CD4-positive, alpha-beta T cell (primary cell): ENCODE measurements at regions of chr12 and their contacts with region 1.

Region 1: DNA sequence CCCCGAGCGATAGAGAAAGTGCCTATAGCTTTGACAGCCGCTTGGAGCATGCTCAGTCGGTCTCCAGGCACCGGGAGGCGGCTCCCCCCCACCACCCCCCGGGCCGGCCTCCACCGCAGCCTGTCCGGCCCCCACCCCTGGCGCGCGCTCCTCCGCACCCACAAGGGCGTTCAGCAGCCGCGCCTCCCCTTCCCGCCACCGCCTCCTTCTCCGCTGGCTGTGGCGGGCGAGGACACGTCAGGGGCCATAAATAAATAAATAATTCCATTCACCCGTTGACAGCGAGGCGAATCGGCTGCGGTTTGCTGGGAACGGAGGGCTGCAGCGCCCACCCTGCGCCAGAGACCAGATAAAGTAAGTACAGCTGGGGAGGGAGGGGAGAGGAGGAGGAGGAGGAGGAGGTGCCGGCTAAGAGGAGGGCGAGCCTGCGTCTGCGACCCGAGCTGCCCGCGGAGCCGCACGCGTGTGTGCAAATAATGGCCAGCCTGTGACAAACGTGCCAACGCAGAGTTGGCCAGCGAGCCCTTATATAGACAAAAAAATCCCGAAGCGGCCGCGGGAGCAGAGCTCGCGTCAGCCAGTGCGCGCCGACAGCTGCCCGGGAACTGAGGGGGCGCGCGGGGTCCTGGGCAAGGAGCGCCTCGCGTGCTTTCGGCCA is at the start of gene SLC16A7:
- DNase-seq: peak; percentile 66 to 93 (median 80)
- ATAC-seq: peak; percentile 37
- H3K4me3 ChIP-seq: peak within 1 kb of the TSS; percentile 86
- H3K4me3 Mint-ChIP-seq: peak within 1 kb of the TSS; percentile 96
- H3K27ac ChIP-seq: peak within 1 kb of the TSS; percentile 84 to 91
- H3K27ac Mint-ChIP-seq: peak within 1 kb of the TSS; percentile 99
- H3K4me1 ChIP-seq: peaks cover 11% of the 10 kb centered on the region
- H3K4me1 Mint-ChIP-seq: peaks cover 72% of the 10 kb centered on the region
- H3K27me3 ChIP-seq: no peaks in the 10 kb centered on the region
- H3K27me3 Mint-ChIP-seq: peaks cover 4% of the 10 kb centered on the region
- CTCF ChIP-seq: no peak
- total RNA-seq, gene SLC16A7: 23.7 to 24.6 TPM

Region 2: GRCh38 chr12:59578254-59578653 is 17.8 kb before region 1 on chr12:
- CTCF ChIA-PET with region 1: no interaction called
- POLR2A ChIA-PET with region 1: interaction called, 9 read pairs
- intact Hi-C with region 1: loop called in 1 of 2 experiments (anchors 2 kb)
- DNase-seq: peak in 2 of 14 experiments; percentile 19 to 43
- ATAC-seq: peak; percentile 83
- H3K4me3 ChIP-seq: no peak overlapping the region
- H3K4me3 Mint-ChIP-seq: peak overlapping the region; percentile 25
- H3K27ac ChIP-seq: no peak overlapping the region
- H3K27ac Mint-ChIP-seq: peak overlapping the region; percentile 1
- H3K4me1 ChIP-seq: peaks cover 13% of the 10 kb centered on the region
- H3K4me1 Mint-ChIP-seq: peaks cover 55% of the 10 kb centered on the region
- H3K27me3 ChIP-seq: no peaks in the 10 kb centered on the region
- H3K27me3 Mint-ChIP-seq: no peaks in the 10 kb centered on the region
- CTCF ChIP-seq: no peak

Region 3: DNA sequence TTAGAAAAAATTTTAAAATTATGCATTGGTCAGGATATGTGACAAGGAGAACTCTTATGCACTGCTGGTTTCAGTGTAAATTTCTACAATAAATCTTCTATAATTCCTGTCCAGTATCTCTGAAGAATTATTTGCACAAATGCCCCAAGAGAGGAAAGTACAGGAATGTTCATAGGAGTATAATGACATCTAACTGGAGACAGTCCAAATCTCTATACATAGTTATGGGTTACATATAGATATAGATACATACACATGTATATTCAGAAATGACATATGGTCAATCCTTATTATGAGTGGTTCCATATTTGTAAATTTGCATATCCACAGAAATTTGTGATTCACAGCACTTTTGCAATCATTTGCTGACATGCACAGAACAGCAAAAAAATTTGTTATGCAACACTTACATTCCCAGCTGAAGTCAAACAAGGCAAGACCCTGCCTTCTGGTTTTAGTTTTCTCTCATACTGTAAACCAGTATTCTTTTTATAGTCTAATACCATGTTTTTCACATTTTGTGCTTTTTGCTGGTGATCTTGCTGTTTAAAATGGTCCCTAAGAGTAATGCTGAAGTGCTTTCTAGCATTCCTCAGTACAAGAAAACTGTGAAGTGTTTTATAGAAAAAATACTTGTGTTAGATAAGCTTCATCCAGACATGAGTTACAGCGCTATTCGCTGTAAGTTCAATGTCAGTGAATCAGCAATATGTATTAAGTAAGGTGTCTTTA is 103.6 kb after region 1 on chr12:
- CTCF ChIA-PET with region 1: no interaction called
- POLR2A ChIA-PET with region 1: no interaction called
- intact Hi-C with region 1: loop called in 1 of 2 experiments (anchors 10 kb)
- DNase-seq: peak in 2 of 14 experiments; percentile 31 to 49
- ATAC-seq: no peak
- H3K4me3 ChIP-seq: no peak overlapping the region
- H3K4me3 Mint-ChIP-seq: no peak overlapping the region
- H3K27ac ChIP-seq: no peak overlapping the region
- H3K27ac Mint-ChIP-seq: no peak overlapping the region
- H3K4me1 ChIP-seq: no peaks in the 10 kb centered on the region
- H3K4me1 Mint-ChIP-seq: peaks cover 17% of the 10 kb centered on the region
- H3K27me3 ChIP-seq: no peaks in the 10 kb centered on the region
- H3K27me3 Mint-ChIP-seq: no peaks in the 10 kb centered on the region
- CTCF ChIP-seq: no peak